ENCODE measurements at regions of chr5 and their contacts with region 1.

Region 1: GRCh38 chr5:38809388-38810359 is 36.1 kb upstream of the OSMR start:
- DNase-seq: peak; percentile 76 to 87
- ATAC-seq: peak; percentile 83 to 94 (median 90)
- H3K4me3 ChIP-seq: no peak overlapping the region
- H3K27ac ChIP-seq: peak overlapping the region in 7 of 10 donors; percentile 24 to 62 (median 43)
- H3K4me1 ChIP-seq: peaks cover 6 to 47% (median 39%) of the 10 kb centered on the region in 9 donors
- H3K27me3 ChIP-seq: peaks cover 0 to 4% (median 0%) of the 10 kb centered on the region in 7 donors
- CTCF ChIP-seq: peak; percentile 80 to 95 (median 83)

Region 2: GRCh38 chr5:38265546-38266179 is 544.0 kb before region 1 on chr5:
- intact Hi-C with region 1: loop called in 1 of 10 experiments (anchors 10 kb)
- DNase-seq: peak; percentile 27 to 67
- ATAC-seq: peak; percentile 70 to 84 (median 76)
- H3K4me3 ChIP-seq: no peak overlapping the region
- H3K27ac ChIP-seq: peak overlapping the region in 1 of 10 donors; percentile 6
- H3K4me1 ChIP-seq: peaks cover 0 to 11% (median 0%) of the 10 kb centered on the region in 9 donors
- H3K27me3 ChIP-seq: peaks cover 0 to 74% (median 45%) of the 10 kb centered on the region in 7 donors
- CTCF ChIP-seq: peak; percentile 56 to 86 (median 75)

Region 3: DNA sequence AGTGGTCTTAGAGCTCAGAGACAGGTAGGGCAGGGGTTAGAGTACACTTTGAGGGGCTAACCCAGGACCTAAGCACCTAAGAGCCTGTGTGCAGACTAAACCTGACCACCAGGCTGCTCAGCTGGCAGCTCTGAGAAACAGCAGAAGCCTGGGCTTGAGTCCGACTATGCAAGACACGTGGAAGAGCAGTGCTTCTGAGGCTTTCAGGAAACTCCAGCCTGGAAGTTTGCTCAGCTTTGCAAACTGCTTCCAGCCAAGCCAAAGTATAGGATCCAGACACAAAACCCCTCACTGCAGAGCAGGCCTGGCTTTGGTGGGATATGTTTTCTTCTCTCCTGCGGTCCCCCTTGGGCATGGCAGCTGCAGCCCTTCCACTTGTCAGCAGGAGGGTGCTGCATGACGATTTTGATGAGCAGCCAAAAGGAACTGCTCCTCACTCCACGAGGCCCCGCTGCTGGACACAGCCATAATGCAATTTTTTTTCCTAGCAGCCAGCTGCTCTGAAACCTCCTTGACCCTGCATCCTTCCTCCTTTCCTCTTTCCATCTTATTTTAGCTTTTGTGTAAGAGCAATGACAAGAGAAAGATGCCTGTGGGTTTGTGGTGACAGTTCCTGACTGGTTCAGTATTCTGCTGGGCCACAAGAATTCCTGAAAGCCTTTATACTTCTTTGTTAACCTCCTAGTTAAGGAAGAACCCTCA is 376.4 kb before region 1 on chr5:
- intact Hi-C with region 1: loop called in 1 of 10 experiments (anchors 5 kb)
- DNase-seq: peak; percentile 59 to 76
- ATAC-seq: peak; percentile 84 to 91 (median 88)
- H3K4me3 ChIP-seq: no peak overlapping the region
- H3K27ac ChIP-seq: peak overlapping the region in 6 of 10 donors; percentile 14 to 69 (median 36)
- H3K4me1 ChIP-seq: peaks cover 6 to 35% (median 18%) of the 10 kb centered on the region in 9 donors
- H3K27me3 ChIP-seq: peaks cover 0 to 65% (median 0%) of the 10 kb centered on the region in 7 donors
- CTCF ChIP-seq: peak in 1 of 9 donors; percentile 19

Region 4: DNA sequence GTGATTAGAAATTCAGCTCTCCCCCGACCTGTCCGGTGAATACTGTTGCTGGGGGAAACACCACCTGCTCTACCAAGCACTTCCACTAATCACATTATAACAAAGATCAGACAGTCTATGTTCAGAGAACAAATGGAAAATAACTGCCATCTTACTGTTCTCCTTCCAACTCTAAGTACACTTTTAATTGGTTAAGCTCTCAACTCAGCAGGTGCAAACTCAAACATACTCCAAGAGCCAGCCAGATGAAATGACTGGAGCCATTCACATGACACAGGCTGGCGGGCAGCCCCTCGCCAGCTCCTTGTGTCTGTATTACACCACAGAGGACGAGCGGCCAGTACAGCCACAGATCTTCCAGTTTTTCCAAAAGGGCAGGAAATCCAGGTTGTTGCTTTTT is 269.4 kb before region 1 on chr5:
- intact Hi-C with region 1: loop called in 1 of 10 experiments (anchors 5 kb)
- DNase-seq: peak; percentile 32 to 39
- ATAC-seq: peak; percentile 75 to 95 (median 92)
- H3K4me3 ChIP-seq: no peak overlapping the region
- H3K27ac ChIP-seq: peak overlapping the region in 6 of 10 donors; percentile 3 to 37 (median 14)
- H3K4me1 ChIP-seq: peaks cover 6 to 97% (median 48%) of the 10 kb centered on the region in 9 donors
- H3K27me3 ChIP-seq: no peaks in the 10 kb centered on the region
- CTCF ChIP-seq: no peak

Region 5: GRCh38 chr5:38569180-38569579 is 240.5 kb before region 1 on chr5:
- intact Hi-C with region 1: no loop called
- DNase-seq: no peak
- ATAC-seq: no peak
- H3K4me3 ChIP-seq: no peak overlapping the region
- H3K27ac ChIP-seq: no peak overlapping the region
- H3K4me1 ChIP-seq: no peaks in the 10 kb centered on the region
- H3K27me3 ChIP-seq: peaks cover 0 to 3% (median 0%) of the 10 kb centered on the region in 7 donors
- CTCF ChIP-seq: no peak

Region 6: DNA sequence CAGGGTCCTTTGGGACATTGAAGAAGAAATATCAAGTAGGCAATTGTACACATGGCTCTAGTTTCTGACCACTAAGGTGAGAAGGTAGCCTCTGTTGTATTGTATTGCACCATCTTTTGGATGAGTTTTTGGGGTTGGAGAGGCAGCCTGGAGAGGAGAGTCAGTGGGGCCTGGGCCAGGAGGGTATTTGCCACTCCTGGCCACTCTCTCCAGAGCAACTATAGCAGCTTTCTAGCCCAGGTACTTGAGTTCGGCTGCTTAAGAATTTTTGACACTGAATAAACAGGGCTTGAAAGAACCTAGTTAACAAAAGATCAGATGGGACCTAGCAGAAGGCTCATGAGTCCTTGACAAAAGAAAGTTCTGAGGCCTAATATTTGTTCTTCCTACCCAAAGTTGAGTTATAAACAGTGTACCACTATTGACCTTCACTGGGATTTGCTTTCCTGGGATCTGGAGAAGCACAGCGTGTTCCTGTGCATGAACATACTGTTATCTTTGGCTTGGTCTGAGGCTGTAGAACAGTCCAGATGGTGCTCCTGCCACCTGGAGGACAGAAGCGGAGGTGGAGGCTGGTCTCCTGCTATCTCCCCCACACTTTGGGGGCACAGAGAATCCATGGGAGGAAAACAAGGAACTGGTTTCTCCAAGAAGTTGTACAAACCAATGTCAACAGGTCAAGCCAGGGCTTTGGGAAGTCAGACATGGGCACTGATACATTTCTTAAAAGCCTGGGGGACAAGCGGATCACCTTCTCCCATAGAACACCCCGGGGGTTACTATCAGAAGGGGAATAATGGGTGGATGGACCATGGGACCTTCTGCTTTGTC is 142.8 kb before region 1 on chr5:
- intact Hi-C with region 1: loop called in 7 of 10 experiments (anchors 5 to 10 kb)
- DNase-seq: peak; percentile 44 to 51
- ATAC-seq: peak; percentile 87 to 97 (median 92)
- H3K4me3 ChIP-seq: no peak overlapping the region
- H3K27ac ChIP-seq: peak overlapping the region in 5 of 10 donors; percentile 1 to 42 (median 31)
- H3K4me1 ChIP-seq: peaks cover 2 to 30% (median 20%) of the 10 kb centered on the region in 9 donors
- H3K27me3 ChIP-seq: no peaks in the 10 kb centered on the region
- CTCF ChIP-seq: peak; percentile 55 to 85 (median 75)

Region 7: DNA sequence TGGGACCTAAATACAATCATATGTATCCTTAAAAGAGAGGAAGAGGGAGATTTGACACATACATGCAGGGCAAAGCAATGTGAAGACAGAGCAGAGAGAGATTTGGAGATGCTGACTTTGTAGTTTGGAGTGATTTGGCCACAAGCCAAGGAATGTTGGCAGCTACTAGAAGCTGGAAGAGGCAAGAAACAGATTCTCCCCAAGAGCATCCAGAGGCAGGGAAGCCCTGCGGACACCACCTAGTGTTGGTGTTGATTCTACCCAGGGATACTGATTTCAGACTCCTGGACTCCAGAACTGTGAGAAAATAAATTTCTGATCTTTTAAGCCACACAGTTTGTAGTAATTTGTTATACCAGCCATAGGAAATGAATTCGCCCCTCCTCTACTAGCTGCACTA is 28.7 kb before region 1 on chr5:
- intact Hi-C with region 1: loop called in 1 of 10 experiments (anchors 2 kb)
- DNase-seq: peak; percentile 37 to 81
- ATAC-seq: peak; percentile 41 to 74 (median 64)
- H3K4me3 ChIP-seq: no peak overlapping the region
- H3K27ac ChIP-seq: no peak overlapping the region
- H3K4me1 ChIP-seq: peaks cover 0 to 40% (median 33%) of the 10 kb centered on the region in 9 donors
- H3K27me3 ChIP-seq: peaks cover 0 to 4% (median 0%) of the 10 kb centered on the region in 7 donors
- CTCF ChIP-seq: peak in 8 of 9 donors; percentile 15 to 60 (median 48)

Measured in heart right ventricle (tissue), 16 donors.